Activated CD4-positive, alpha-beta memory T cell treated with anti-CD3 and anti-CD28 coated beads, Interleukin-2, amount 10 ng/mL, durations not matched to agents 7 days and 5 days (primary cell): ENCODE measurements at regions of chr9 and their contacts with region 1.

Region 1: DNA sequence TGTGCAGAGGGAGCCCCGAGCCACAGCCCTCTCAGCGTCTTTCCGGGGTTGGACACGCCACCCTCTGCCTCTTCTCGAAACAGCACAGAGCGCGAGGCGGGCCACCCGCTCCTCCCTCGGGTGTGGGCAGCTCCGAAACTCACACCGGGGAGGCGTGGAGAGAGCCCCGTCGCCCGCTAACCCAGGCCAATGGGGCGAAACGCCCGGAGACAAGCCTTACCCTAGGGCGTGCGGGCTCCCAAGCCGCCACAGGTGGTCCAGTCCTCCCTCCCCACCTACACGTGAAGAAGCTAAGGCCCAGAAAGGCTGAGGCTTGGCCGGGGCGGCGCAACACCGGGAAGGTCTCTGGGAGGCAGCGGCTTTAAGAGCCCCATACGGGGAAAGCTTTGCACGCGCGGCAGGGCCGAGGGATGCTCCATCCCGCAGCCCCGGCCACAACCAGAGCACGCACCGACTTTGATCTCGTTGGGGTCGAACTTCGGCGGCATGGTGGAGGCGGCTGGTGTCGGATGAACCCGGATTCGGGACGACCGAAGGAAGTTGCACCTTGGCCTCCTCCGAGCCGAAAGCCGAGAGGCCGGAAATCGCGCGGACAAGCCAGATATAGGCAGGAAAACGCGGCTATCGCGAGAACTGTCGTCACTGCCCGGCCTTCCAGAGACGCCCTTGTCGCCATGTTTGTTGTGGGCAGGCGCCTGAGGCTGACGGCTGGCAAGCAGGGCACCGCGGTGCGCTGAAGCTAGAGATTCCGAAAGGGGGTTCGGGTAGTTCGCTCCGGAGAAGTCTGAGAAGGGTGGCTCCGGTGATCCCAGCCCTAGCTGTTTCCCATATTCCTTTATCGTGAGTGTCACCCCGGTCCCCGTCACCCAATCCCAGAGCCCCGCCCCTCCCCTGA is at the starts of genes LRSAM1 and RPL12:
- DNase-seq: peak; percentile 98
- H3K4me3 Mint-ChIP-seq: peak within 1 kb of the TSS; percentile 84
- H3K27ac Mint-ChIP-seq: peak within 1 kb of the TSS; percentile 97
- H3K4me1 Mint-ChIP-seq: peaks cover 51% of the 10 kb centered on the region
- H3K27me3 Mint-ChIP-seq: no peaks in the 10 kb centered on the region
- total RNA-seq, gene LRSAM1: 25.4 to 26.9 TPM
- total RNA-seq, gene RPL12: 1,379 to 1,395 TPM

Region 2: GRCh38 chr9:127224178-127224882 is 226.7 kb before region 1 on chr9:
- CTCF ChIA-PET with region 1: interaction called, 6 read pairs
- POLR2A ChIA-PET with region 1: interaction called, 20 read pairs
- DNase-seq: peak; percentile 86
- H3K4me3 Mint-ChIP-seq: peak overlapping the region; percentile 81
- H3K27ac Mint-ChIP-seq: peak overlapping the region; percentile 76
- H3K4me1 Mint-ChIP-seq: peaks cover 31% of the 10 kb centered on the region
- H3K27me3 Mint-ChIP-seq: peaks cover 45% of the 10 kb centered on the region

Region 3: GRCh38 chr9:127370672-127371648 is 80.1 kb before region 1 on chr9:
- CTCF ChIA-PET with region 1: no interaction called
- POLR2A ChIA-PET with region 1: no interaction called
- DNase-seq: no peak
- H3K4me3 Mint-ChIP-seq: no peak overlapping the region
- H3K27ac Mint-ChIP-seq: no peak overlapping the region
- H3K4me1 Mint-ChIP-seq: no peaks in the 10 kb centered on the region
- H3K27me3 Mint-ChIP-seq: peaks cover 49% of the 10 kb centered on the region

Region 4: GRCh38 chr9:127396808-127397497 is 54.1 kb before region 1 on chr9 and contains the start of gene SLC2A8:
- CTCF ChIA-PET with region 1: interaction called, 7 read pairs
- POLR2A ChIA-PET with region 1: interaction called, 54 read pairs
- DNase-seq: peak; percentile 98
- H3K4me3 Mint-ChIP-seq: peak within 1 kb of the TSS; percentile 67
- H3K27ac Mint-ChIP-seq: no peak within 1 kb of the TSS
- H3K4me1 Mint-ChIP-seq: peaks cover 18% of the 10 kb centered on the region
- H3K27me3 Mint-ChIP-seq: peaks cover 37% of the 10 kb centered on the region
- total RNA-seq, gene SLC2A8: 7.5 to 7.7 TPM

Region 5: DNA sequence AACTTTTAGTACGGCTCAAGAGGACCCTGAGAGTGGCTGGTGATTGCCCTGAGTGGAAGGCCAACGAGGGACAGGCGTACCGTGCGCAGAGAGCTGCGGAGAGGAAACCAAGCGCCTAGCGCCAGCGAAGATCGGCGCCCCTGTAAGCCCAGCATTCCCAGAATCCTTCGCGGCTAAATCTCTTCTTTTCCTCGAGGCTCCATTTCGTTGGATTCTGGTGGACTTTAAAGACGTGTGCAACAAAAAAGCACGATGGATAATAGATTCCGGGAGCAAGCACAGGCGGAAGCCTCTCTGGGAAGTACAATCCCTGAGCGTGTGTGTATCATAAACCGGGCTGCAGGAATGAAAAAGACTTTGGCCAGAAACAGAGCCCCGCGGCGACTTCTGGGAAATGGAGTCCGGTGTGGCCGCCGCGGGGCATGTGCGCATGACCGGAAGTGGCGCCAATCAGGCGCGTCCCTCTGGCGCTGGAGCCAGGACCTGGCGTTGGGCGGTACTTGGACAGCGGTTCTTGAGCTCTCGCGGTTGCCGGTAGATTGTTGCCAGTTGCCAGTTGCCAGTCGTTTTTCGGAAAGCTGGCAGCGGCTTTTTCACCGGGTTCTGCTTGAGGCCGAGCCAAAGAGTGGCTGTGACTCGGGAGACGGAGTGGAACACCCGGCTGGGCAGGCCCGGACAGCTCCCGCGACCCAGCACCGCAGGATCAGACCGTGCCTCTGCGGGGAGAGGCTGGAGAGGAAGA is 27.0 kb before region 1 on chr9 and contains the start of gene ZNF79:
- CTCF ChIA-PET with region 1: interaction called, 5 read pairs
- POLR2A ChIA-PET with region 1: interaction called, 75 read pairs
- DNase-seq: peak; percentile 93
- H3K4me3 Mint-ChIP-seq: peak within 1 kb of the TSS; percentile 93
- H3K27ac Mint-ChIP-seq: peak within 1 kb of the TSS; percentile 91
- H3K4me1 Mint-ChIP-seq: peaks cover 52% of the 10 kb centered on the region
- H3K27me3 Mint-ChIP-seq: no peaks in the 10 kb centered on the region
- total RNA-seq, gene ZNF79: 12.5 to 12.7 TPM

Region 6: DNA sequence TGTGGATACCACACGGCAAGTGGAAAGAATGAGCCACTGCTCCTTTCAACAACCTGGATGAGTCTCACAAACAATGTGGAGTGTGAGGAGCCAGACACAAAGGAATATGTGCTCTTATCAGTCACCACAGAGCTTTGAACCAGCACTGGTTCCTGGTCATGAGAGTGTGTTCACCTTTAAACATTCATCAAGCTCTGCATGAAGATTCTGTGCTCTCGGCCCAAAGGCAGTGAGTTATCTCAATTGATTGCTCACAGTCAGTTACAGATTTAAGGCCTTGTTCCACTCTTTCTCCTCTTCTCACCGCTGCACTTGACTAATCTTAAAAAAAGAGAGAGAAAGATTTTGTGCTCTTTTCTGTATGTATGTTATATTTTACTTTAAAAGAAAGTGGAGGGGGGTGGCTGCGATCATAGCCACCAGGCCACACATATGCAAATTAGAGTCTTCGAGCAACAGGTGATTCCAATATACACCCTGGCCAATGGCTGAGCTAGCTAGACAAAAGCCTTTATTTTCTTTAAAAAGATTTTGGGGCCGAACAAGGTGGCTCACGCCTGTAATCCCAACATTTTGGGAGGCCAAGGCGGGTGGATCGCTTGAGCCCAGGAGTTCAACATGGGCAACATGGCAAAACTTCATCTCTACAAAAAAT is 19.7 kb after region 1 on chr9:
- CTCF ChIA-PET with region 1: interaction called, 3 read pairs
- POLR2A ChIA-PET with region 1: interaction called, 11 read pairs
- DNase-seq: no peak
- H3K4me3 Mint-ChIP-seq: no peak overlapping the region
- H3K27ac Mint-ChIP-seq: no peak overlapping the region
- H3K4me1 Mint-ChIP-seq: no peaks in the 10 kb centered on the region
- H3K27me3 Mint-ChIP-seq: no peaks in the 10 kb centered on the region

Region 7: GRCh38 chr9:127629468-127630081 is 178.5 kb after region 1 on chr9:
- CTCF ChIA-PET with region 1: no interaction called
- POLR2A ChIA-PET with region 1: no interaction called
- DNase-seq: no peak
- H3K4me3 Mint-ChIP-seq: no peak overlapping the region
- H3K27ac Mint-ChIP-seq: no peak overlapping the region
- H3K4me1 Mint-ChIP-seq: peaks cover 12% of the 10 kb centered on the region
- H3K27me3 Mint-ChIP-seq: peaks cover 3% of the 10 kb centered on the region